ENCODE measurements at regions of chr12 and their contacts with region 1.

Region 1: DNA sequence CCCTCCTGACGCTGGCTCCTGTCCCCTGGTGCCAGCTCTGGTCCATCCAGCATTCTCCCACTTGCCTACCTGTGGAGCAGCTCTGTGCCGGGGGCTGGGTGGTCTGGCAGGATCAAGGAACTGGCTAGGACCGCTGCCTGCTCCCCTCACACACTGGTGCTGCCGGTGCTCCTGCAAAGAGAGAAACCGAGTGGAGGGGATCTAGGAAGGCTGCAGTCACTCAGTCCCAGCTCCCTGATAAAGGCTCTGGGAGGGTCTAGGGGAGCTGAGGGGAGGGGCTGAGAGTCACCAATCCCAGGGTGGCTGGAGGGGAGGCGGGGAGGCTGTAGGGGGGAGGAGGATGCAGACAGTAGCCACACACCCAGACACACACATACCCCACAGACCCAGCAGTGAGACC is at the start of gene TAC3:
- DNase-seq: no peak
- H3K4me3 Mint-ChIP-seq: no peak within 1 kb of the TSS
- H3K27ac Mint-ChIP-seq: no peak within 1 kb of the TSS
- H3K4me1 Mint-ChIP-seq: no peaks in the 10 kb centered on the region
- H3K27me3 Mint-ChIP-seq: peaks cover 40% of the 10 kb centered on the region
- CTCF ChIP-seq: no peak
- total RNA-seq, gene TAC3: not detected in 2 replicates

Region 2: GRCh38 chr12:57031138-57031725 is 14.9 kb after region 1 on chr12:
- CTCF ChIA-PET with region 1: interaction called, 12 read pairs
- POLR2A ChIA-PET with region 1: interaction called, 4 read pairs
- intact Hi-C with region 1: no loop called
- DNase-seq: peak; percentile 81
- H3K4me3 Mint-ChIP-seq: peak overlapping the region; percentile 41
- H3K27ac Mint-ChIP-seq: peak overlapping the region; percentile 76
- H3K4me1 Mint-ChIP-seq: peaks cover 30% of the 10 kb centered on the region
- H3K27me3 Mint-ChIP-seq: peaks cover 21% of the 10 kb centered on the region
- CTCF ChIP-seq: no peak